IMR-90 (cell line): ENCODE measurements at regions of chr19 and their contacts with region 1.

Region 1: GRCh38 chr19:44176590-44176989 is 11.7 kb downstream of the ZNF226 start:
- DNase-seq: no peak
- ATAC-seq: no peak
- H3K4me3 ChIP-seq: no peak overlapping the region
- H3K27ac ChIP-seq: no peak overlapping the region
- H3K4me1 ChIP-seq: no peaks in the 10 kb centered on the region
- H3K27me3 ChIP-seq: no peaks in the 10 kb centered on the region
- CTCF ChIP-seq: no peak
- POLR2A ChIP-seq: no peak
- RAD21 ChIP-seq: no peak

Region 2: DNA sequence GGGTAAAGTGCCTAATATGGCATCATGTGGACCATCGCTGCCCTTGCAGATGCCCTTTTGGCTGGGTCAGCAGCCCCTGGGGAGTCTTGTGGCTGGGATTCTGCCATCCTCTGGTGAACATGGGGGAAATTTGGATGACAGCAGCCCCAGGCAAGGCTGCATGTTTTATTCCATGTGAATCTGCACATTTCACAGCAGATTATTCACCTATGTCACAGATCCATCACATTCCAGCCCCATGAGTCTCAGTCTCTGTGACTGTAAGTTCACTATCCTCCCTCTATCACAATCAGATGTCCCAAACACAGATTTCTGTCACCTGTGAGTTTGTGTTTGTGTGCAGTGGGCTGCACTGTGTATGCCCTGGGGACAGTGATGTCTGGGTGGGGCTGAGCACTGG is 870.5 kb before region 1 on chr19:
- CTCF ChIA-PET with region 1: no interaction called
- POLR2A ChIA-PET with region 1: no interaction called
- dilution Hi-C with region 1: no loop called
- in situ Hi-C with region 1: no loop called
- intact Hi-C with region 1: no loop called
- DNase-seq: no peak
- ATAC-seq: no peak
- H3K4me3 ChIP-seq: no peak overlapping the region
- H3K27ac ChIP-seq: no peak overlapping the region
- H3K4me1 ChIP-seq: no peaks in the 10 kb centered on the region
- H3K27me3 ChIP-seq: peaks cover 53% of the 10 kb centered on the region
- CTCF ChIP-seq: no peak
- POLR2A ChIP-seq: no peak
- RAD21 ChIP-seq: no peak

Region 3: GRCh38 chr19:44190020-44190419 is 13.4 kb after region 1 on chr19:
- CTCF ChIA-PET with region 1: no interaction called
- POLR2A ChIA-PET with region 1: no interaction called
- dilution Hi-C with region 1: no loop called
- in situ Hi-C with region 1: no loop called
- intact Hi-C with region 1: no loop called
- DNase-seq: no peak
- ATAC-seq: no peak
- H3K4me3 ChIP-seq: no peak overlapping the region
- H3K27ac ChIP-seq: no peak overlapping the region
- H3K4me1 ChIP-seq: no peaks in the 10 kb centered on the region
- H3K27me3 ChIP-seq: no peaks in the 10 kb centered on the region
- CTCF ChIP-seq: no peak
- POLR2A ChIP-seq: no peak
- RAD21 ChIP-seq: no peak

Region 4: GRCh38 chr19:44278181-44278690 is 101.6 kb after region 1 on chr19:
- CTCF ChIA-PET with region 1: no interaction called
- POLR2A ChIA-PET with region 1: no interaction called
- dilution Hi-C with region 1: no loop called
- in situ Hi-C with region 1: no loop called
- intact Hi-C with region 1: no loop called
- DNase-seq: peak; percentile 7
- ATAC-seq: no peak
- H3K4me3 ChIP-seq: no peak overlapping the region
- H3K27ac ChIP-seq: no peak overlapping the region
- H3K4me1 ChIP-seq: no peaks in the 10 kb centered on the region
- H3K27me3 ChIP-seq: no peaks in the 10 kb centered on the region
- CTCF ChIP-seq: no peak
- POLR2A ChIP-seq: no peak
- RAD21 ChIP-seq: no peak

Region 5: GRCh38 chr19:44447916-44448674 is 271.5 kb after region 1 on chr19 and contains the start of gene ZNF229:
- CTCF ChIA-PET with region 1: no interaction called
- POLR2A ChIA-PET with region 1: no interaction called
- dilution Hi-C with region 1: no loop called
- in situ Hi-C with region 1: no loop called
- intact Hi-C with region 1: loop called (anchors 10 kb)
- DNase-seq: peak; percentile 94
- ATAC-seq: peak; percentile 100
- H3K4me3 ChIP-seq: peak within 1 kb of the TSS; percentile 92
- H3K27ac ChIP-seq: peak within 1 kb of the TSS; percentile 67
- H3K4me1 ChIP-seq: peaks cover 3% of the 10 kb centered on the region; the same call in 1 of the 2 replicates
- H3K27me3 ChIP-seq: no peaks in the 10 kb centered on the region
- CTCF ChIP-seq: no peak
- POLR2A ChIP-seq: 0 out of 2 replicates have a peak, but pooled peaks have one; percentile 57
- RAD21 ChIP-seq: no peak
- total RNA-seq, gene ZNF229: 13.1 and 17.6 TPM in 2 replicates